Posterior vena cava (tissue), 2 donors: ENCODE measurements at regions of chr16 and their contacts with region 1.

Region 1: DNA sequence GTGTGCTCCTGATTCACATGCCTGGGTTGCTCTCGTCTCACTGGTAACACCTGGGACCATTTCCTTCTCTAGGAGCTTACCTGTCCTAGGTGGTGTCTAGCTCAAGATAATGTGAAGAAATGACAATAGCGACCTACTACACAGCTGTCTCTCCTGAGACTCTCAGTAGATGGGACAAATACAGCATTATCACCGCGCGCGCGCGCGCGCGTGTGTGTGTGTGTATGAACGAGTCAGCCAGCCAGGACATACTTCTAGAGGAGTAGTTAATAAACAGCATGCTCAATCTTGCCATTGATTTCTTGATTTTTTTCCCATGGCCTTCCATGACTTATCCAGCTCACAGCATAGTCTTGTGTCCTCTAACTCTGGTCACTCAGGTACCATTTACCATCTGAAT is 268.6 kb downstream of the PHKB start:
- DNase-seq: no peak

Region 2: DNA sequence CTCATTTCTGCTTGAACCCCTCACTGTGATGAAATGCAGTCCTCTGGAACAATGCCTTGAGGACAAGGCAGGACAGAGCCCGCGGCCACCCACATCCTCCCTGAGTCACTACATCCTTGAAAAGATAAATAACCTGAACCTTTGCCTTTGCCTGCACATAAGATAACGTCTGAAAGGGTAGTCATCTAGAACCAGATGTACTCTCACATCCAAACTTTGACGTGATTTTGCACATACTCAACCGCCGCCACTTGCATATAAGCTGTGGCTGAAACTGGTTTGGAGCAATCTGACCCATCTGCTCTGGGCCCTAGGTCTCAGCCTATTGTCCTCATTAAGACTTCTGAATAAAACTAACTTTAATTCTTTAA is 16.5 kb before region 1 on chr16:
- intact Hi-C with region 1: loop called in 1 of 2 experiments (anchors 1 kb)
- DNase-seq: no peak

Region 3: DNA sequence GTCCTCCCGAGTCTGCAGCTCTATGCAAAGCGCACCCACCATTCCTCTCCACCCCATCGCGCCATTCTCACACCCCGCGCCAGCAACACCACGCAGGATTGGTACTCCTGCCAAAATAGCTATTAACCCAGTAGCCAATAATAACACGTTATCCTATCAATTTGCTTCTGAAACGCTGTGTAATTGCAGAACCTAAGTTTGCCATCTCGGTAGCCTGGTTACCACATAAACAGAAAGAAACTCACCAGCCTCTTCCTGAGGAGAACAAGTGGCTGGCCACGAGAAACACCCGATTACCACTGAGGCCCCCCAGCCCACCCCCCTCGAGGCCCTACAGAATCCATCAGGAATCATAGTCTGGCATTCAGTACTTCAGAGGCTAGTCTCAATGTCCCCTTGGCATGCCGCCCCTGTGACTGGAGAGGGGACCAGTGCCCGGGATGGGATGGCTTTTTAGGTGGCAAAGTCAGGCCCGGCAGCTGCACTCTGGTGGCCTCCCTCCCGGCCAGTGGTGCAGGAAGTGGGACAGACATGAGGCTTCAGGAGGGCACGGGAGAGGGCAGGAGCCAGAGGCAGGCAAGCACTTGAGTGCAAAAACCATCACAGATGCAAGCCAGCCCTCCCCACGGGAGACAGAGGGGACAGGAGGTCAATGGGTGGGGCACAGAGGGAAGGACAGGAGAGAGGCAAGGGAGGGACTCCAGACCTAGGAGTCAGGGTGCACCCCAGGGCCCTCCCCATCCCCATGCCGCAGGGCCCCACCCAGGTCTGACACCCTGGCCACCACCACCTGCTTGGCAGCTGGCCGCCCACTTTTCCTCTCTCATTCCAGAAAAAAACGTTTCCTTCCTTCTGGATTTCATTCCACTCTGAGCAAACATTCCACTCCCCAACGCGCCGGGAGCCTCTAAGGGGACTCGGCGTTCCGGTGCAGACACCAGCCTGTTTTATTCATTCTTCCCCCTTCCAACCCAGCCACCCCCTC is 1933.7 kb after region 1 on chr16:
- intact Hi-C with region 1: no loop called
- DNase-seq: no peak